K562 (cell line): ENCODE measurements at regions of chr14 and their contacts with region 1.

Region 1: DNA sequence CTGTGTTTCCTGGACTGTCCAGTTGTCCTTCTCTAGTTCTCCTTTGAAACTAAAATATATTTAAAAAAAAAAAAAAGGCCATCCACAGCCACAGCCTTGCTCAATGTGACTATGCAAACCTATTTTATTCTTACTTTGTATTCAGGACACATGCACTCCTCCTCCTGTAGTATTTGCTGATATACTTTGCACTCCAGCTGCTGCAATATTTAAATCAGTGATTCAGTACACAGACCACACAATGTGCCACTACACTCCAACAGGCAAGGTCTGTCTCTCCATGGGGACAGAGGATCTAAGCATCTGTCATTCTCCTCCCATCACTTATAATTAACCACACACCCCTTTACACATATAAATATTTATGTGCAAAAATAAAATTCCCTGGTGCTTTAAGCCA is 40.2 kb upstream of the CCDC196 start:
- DNase-seq: no peak
- ATAC-seq: no peak
- H3K4me3 ChIP-seq: no peak overlapping the region
- H3K27ac ChIP-seq: no peak overlapping the region
- H3K4me1 ChIP-seq: no peaks in the 10 kb centered on the region
- H3K27me3 ChIP-seq: no peaks in the 10 kb centered on the region
- CTCF ChIP-seq: no peak
- EP300 ChIP-seq: no peak
- POLR2A ChIP-seq: no peak
- RAD21 ChIP-seq: no peak

Region 2: DNA sequence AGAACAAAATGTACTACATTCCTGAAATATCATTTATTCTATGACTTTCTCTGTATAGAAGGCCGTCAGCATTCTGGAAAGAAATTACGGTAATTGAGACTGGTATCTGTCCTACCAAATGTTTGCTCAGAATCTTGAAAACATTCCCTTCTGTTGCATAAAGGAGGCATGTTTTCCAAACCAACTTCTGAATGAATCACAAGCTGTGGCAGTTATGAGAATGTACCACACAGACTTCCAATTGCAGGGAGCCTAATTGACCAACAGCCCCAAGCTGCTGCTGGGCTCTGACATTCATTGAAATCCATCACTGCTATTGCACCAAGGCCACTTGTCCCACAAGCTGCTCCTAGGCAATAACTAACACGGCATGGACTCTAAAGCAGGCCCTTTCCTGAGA is 145.1 kb before region 1 on chr14:
- CTCF ChIA-PET with region 1: no interaction called
- POLR2A ChIA-PET with region 1: no interaction called
- in situ Hi-C with region 1: loop called (anchors 5 kb)
- intact Hi-C with region 1: no loop called
- DNase-seq: no peak
- ATAC-seq: no peak
- H3K4me3 ChIP-seq: no peak overlapping the region
- H3K27ac ChIP-seq: no peak overlapping the region
- H3K4me1 ChIP-seq: no peaks in the 10 kb centered on the region
- H3K27me3 ChIP-seq: no peaks in the 10 kb centered on the region
- CTCF ChIP-seq: no peak
- EP300 ChIP-seq: no peak
- POLR2A ChIP-seq: no peak
- RAD21 ChIP-seq: no peak